T-cell (primary cell): ENCODE measurements at regions of chr9 and their contacts with region 1.

Region 1: GRCh38 chr9:68817079-68817875 is 112.2 kb downstream of the PIP5K1B start:
- DNase-seq: no peak
- ATAC-seq: no peak
- H3K4me3 ChIP-seq: no peak overlapping the region
- H3K4me3 Mint-ChIP-seq: no peak overlapping the region
- H3K27ac ChIP-seq: no peak overlapping the region
- H3K27ac Mint-ChIP-seq: no peak overlapping the region
- H3K4me1 ChIP-seq: no peaks in the 10 kb centered on the region
- H3K4me1 Mint-ChIP-seq: no peaks in the 10 kb centered on the region
- H3K27me3 ChIP-seq: no peaks in the 10 kb centered on the region
- H3K27me3 Mint-ChIP-seq: peaks cover 6 to 11% of the 10 kb centered on the region in 2 donors

Region 2: DNA sequence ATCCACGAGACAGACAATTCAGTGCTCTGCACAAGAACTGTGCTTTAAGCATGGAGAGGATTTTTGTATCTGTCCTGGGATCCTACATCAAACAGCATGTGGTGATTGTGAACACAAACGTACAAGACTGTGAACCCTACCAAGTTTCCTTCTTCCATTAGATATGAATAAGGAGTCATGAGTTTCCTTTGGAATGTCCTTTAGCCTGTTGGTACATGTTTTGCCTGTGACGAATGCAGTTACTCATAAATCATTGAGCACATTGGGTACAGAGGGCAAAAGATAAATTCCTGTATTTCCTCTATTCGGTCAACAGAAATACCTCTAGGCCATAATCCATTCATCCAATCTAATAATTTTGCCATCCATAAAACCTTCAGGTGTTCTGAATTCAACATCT is 279.8 kb after region 1 on chr9:
- CTCF ChIA-PET with region 1: interaction called in 1 of 2 experiments, 12 read pairs
- POLR2A ChIA-PET with region 1: no interaction called
- DNase-seq: no peak
- ATAC-seq: no peak
- H3K4me3 ChIP-seq: no peak overlapping the region
- H3K4me3 Mint-ChIP-seq: no peak overlapping the region
- H3K27ac ChIP-seq: no peak overlapping the region
- H3K27ac Mint-ChIP-seq: no peak overlapping the region
- H3K4me1 ChIP-seq: no peaks in the 10 kb centered on the region
- H3K4me1 Mint-ChIP-seq: no peaks in the 10 kb centered on the region
- H3K27me3 ChIP-seq: no peaks in the 10 kb centered on the region
- H3K27me3 Mint-ChIP-seq: no peaks in the 10 kb centered on the region